ENCODE measurements at regions of chr5 and their contacts with region 1.

Region 1: GRCh38 chr5:140244525-140245025 is 58.3 kb downstream of the PFDN1 start:
- DNase-seq: peak; percentile 95
- H3K4me3 Mint-ChIP-seq: peak overlapping the region; percentile 25
- H3K27ac Mint-ChIP-seq: peak overlapping the region; percentile 62
- H3K4me1 Mint-ChIP-seq: peaks cover 38% of the 10 kb centered on the region
- H3K27me3 Mint-ChIP-seq: no peaks in the 10 kb centered on the region

Region 2: GRCh38 chr5:140351609-140352334 is 107.2 kb after region 1 on chr5:
- intact Hi-C with region 1: loop called (anchors 1 kb)
- DNase-seq: peak; percentile 94
- H3K4me3 Mint-ChIP-seq: peak overlapping the region; percentile 40
- H3K27ac Mint-ChIP-seq: no peak overlapping the region
- H3K4me1 Mint-ChIP-seq: peaks cover 31% of the 10 kb centered on the region
- H3K27me3 Mint-ChIP-seq: peaks cover 9% of the 10 kb centered on the region

Region 3: DNA sequence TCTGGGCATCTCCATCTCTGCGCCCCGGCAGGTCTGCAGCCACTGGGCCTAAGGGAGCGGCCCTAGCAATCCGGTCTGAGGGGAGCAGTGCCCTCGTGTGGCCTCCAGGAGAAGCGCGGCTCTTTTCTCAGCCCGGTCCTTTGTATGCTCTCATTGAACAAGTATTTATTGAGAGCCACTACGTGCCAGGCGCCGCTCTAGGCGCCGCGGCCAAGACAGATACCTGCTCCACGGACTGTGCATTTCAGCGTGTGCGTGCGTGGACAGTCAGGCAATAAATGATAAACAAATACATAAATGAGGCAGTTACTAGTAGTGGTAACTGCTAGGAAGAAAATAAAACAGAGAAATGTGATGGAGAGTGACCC is 113.1 kb after region 1 on chr5:
- intact Hi-C with region 1: loop called (anchors 1 kb)
- DNase-seq: peak; percentile 94
- H3K4me3 Mint-ChIP-seq: peak overlapping the region; percentile 60
- H3K27ac Mint-ChIP-seq: no peak overlapping the region
- H3K4me1 Mint-ChIP-seq: peaks cover 19% of the 10 kb centered on the region
- H3K27me3 Mint-ChIP-seq: peaks cover 5% of the 10 kb centered on the region

Region 4: DNA sequence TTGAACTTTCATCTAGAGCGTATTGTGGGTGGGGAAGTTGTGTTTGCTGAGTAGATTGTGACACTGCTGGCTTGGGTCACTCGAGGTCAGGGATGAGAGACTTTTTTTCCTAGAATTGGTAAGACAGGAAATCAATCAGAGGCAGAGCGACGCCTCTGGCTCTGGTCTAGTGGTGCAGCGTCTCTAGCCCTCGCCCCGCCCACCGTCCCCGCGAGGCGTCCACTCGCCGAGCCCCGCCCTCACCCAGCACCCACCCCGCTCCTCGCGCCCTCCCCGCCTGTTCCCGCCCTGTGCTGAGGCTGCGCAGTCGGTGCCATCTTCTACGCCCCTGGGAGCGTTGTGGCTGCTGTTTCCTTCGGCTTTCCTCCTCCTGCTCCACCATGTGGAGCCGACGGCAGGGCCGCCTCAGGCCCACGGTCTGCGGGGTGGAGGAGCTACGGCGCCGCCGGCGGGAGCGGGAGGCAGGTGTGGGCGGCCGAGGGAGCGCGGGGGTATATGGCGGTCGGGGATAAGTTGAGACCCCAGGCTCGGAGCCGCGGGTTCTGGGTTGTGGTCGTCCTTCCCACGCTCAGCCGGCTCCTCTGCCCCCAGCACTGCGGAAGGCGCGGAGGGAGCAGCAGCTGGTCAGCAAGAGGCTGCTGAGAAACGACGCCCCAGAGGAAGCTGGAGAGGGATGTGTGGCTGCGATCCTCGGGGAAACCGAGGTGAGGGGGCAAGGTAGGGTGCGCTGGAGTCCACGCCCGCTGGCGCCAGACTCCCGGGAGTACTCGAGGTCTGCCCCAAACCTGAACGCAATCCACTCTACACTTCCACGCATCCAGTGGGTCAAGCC is 394.8 kb after region 1 on chr5 and contains the start of gene TMCO6:
- intact Hi-C with region 1: loop called (anchors 5 kb)
- DNase-seq: peak; percentile 98
- H3K4me3 Mint-ChIP-seq: peak within 1 kb of the TSS; percentile 86
- H3K27ac Mint-ChIP-seq: peak within 1 kb of the TSS; percentile 90
- H3K4me1 Mint-ChIP-seq: peaks cover 37% of the 10 kb centered on the region
- H3K27me3 Mint-ChIP-seq: no peaks in the 10 kb centered on the region
- total RNA-seq, gene TMCO6: 38.1 and 41.9 TPM in 2 replicates

Region 5: DNA sequence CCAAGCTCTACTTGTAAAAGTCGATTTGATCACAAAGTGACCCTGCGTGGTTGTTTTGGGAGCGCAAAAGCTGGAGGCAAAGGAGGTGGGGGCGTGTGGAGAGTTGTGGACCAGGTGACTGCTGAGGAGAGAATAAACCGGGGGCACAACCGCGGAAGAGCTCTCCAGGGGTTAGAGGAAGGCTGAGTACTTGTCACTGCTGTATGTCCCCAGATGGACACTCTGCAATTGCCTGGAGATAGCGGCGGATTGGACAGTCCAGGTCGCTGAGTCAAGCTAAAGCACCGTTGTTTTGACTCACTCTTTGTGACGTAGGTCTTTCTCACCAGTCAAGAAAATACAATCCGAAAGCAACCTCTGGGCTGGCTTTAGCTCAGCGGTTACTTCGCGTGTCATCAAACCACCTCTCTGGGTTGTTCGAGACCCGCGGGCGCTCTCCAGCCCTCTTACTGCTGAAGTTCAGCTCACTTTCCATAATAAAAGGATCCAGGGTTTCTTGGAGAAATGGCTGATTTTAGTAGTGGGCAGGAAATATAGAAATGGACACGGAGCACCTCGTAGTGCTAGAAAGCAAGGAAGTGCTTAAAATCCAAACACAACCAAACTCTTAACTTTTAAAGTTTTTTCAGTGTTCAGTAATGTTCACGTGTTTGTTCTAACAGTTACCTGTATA is 481.4 kb after region 1 on chr5:
- intact Hi-C with region 1: loop called (anchors 5 kb)
- DNase-seq: peak; percentile 93
- H3K4me3 Mint-ChIP-seq: peak overlapping the region; percentile 84
- H3K27ac Mint-ChIP-seq: peak overlapping the region; percentile 83
- H3K4me1 Mint-ChIP-seq: peaks cover 8% of the 10 kb centered on the region
- H3K27me3 Mint-ChIP-seq: peaks cover 20% of the 10 kb centered on the region